ENCODE measurements at regions of chr12 and their contacts with region 1.

Region 1: GRCh38 chr12:50174971-50175715 is 8.0 kb upstream of the CERS5 start:
- DNase-seq: no peak
- ATAC-seq: no peak
- H3K4me3 Mint-ChIP-seq: no peak overlapping the region
- H3K27ac Mint-ChIP-seq: no peak overlapping the region
- H3K4me1 Mint-ChIP-seq: peaks cover 2% of the 10 kb centered on the region
- H3K27me3 Mint-ChIP-seq: no peaks in the 10 kb centered on the region
- CTCF ChIP-seq: peak; percentile 97

Region 2: GRCh38 chr12:50084775-50085614 is 90.1 kb before region 1 on chr12 and contains the start of gene SMARCD1:
- CTCF ChIA-PET with region 1: interaction called, 58 read pairs
- POLR2A ChIA-PET with region 1: no interaction called
- intact Hi-C with region 1: loop called (anchors 5 kb)
- DNase-seq: peak; percentile 90
- ATAC-seq: peak; percentile 88
- H3K4me3 Mint-ChIP-seq: peak within 1 kb of the TSS; percentile 90
- H3K27ac Mint-ChIP-seq: peak within 1 kb of the TSS; percentile 93
- H3K4me1 Mint-ChIP-seq: peaks cover 44% of the 10 kb centered on the region
- H3K27me3 Mint-ChIP-seq: no peaks in the 10 kb centered on the region
- CTCF ChIP-seq: no peak
- total RNA-seq, gene SMARCD1: 47.3 to 55.1 TPM

Region 3: DNA sequence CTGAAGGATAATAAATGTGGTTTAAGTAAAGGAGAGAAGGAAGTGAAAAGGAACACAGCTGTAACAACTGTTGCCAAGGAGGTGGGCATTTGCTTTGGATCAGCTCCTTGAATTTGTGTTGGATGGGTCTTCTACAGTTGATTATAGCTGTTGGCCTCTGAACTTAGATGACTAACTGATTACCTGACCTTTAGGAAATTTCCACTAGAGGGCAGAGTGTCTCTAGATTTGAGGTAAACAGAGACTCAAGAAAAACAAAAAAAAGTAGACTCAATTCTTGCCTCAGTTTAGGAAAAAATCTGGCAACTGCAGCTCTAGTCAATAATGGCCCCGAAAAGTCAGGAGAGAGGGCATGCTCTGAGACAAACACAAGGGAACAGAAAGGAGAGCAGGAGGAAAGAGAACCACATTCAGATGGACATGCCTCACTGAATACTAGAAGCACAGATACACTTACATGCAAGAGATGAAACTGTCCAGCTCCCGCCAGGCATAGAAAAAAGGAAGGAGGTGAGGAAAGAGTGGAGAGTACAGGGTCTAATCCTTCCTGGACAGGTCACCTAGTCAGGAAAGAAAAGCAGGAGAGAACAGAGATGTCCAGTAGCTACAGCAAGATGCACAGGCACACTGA is 42.5 kb before region 1 on chr12:
- CTCF ChIA-PET with region 1: interaction called, 24 read pairs
- POLR2A ChIA-PET with region 1: no interaction called
- intact Hi-C with region 1: no loop called
- DNase-seq: no peak
- ATAC-seq: peak; percentile 45
- H3K4me3 Mint-ChIP-seq: no peak overlapping the region
- H3K27ac Mint-ChIP-seq: peak overlapping the region; percentile 68
- H3K4me1 Mint-ChIP-seq: peaks cover 4% of the 10 kb centered on the region
- H3K27me3 Mint-ChIP-seq: no peaks in the 10 kb centered on the region
- CTCF ChIP-seq: peak; percentile 39

Region 4: DNA sequence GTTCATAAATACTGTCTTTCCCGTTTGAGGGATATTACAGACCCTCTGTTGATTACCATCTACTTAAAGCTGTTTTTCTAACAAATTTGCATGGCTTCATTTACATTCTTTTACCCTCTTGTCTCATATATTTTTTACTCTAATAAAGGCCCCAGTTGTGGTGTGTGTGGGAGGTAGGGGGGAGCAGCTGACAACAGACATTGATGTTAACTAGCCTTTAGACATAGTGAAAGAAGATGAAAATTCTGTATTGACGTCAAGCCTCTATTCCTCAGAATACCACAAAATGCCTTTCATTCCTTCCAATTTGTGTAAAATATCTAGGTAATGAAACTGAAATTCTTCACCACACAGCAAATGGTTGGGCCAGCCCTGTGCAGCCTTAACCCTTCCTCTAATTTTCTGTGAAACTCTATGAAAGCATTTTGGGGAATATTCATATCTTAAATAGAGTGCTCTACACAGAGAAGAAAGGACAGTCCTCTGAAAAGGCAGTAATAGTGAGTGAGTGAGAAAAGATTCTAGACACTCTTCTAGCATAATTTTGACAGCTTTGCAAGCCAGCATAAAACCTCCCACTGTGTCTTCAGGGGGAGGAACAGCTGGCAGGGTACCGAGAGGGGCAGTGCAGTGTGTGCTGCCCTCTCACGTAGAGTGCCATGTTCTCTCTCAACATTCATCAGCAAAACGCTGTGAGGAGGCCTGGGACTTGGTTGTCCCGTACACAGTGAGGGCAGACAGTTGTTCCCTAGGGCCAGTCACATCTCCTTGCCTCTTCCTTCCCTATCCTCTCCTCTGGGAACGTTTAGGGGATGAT is 12.1 kb after region 1 on chr12:
- CTCF ChIA-PET with region 1: interaction called, 26 read pairs
- POLR2A ChIA-PET with region 1: interaction called, 3 read pairs
- intact Hi-C with region 1: no loop called
- DNase-seq: peak; percentile 84
- ATAC-seq: peak; percentile 82
- H3K4me3 Mint-ChIP-seq: peak overlapping the region; percentile 19
- H3K27ac Mint-ChIP-seq: peak overlapping the region; percentile 92
- H3K4me1 Mint-ChIP-seq: peaks cover 50% of the 10 kb centered on the region
- H3K27me3 Mint-ChIP-seq: no peaks in the 10 kb centered on the region
- CTCF ChIP-seq: no peak